Activated CD8-positive, alpha-beta T cell treated with anti-CD3 and anti-CD28 coated beads, Interleukin-2, amount 10 ng/mL, durations not matched to agents 7 days and 5 days (primary cell): ENCODE measurements at regions of chr2 and their contacts with region 1.

Region 1: GRCh38 chr2:113157118-113157896 is 16.5 kb upstream of the PSD4 start:
- DNase-seq: peak; percentile 61
- ATAC-seq: peak; percentile 90
- H3K4me3 Mint-ChIP-seq: peak overlapping the region; percentile 86
- H3K27ac Mint-ChIP-seq: peak overlapping the region; percentile 82
- H3K4me1 Mint-ChIP-seq: peaks cover 33% of the 10 kb centered on the region
- H3K27me3 Mint-ChIP-seq: peaks cover 7% of the 10 kb centered on the region

Region 2: DNA sequence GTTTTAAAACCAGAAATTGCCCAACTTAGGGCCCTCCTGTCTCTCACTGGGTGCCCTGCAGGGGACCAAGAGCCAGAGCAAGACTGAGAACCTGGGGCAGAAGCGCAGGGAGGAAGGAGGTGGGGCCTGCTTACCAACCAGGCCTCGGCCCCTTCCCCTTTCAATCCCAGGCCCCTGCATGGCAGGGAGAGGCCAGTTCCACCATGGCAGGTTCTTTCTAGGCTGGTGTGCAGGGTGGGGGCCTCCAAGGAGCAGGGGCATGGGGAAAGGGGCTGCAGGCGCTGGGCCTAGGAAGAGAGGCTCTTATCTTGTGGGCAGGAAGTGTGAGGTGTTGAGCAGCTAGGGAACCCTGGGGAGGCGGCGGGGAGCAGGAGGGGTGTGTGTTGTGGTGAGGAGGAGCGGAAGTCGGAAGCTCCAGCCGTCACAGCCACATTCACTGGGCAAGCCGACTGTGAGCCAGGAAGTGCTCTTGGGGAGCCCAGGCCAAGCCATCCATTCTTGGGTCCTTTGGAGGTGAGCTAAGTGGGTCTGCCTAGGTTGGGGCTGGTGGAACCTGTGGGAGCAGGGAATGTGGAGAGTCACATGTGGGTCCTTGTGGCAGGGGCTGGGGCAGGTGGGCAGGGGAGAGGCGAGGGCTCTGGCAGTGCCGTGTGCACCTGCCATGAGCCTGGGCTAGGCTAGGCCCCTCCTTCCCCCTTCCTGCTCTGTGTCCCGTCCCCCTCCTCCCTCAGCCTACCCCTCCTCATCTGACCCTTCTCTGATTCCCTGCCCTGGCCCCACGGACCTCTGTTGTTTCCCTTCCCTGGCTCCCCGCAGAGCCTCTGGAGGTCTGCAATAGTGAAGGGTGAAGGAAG is 16.5 kb after region 1 on chr2 and contains the start of gene PSD4:
- CTCF ChIA-PET with region 1: interaction called, 63 read pairs
- POLR2A ChIA-PET with region 1: interaction called, 81 read pairs
- DNase-seq: peak; percentile 96
- ATAC-seq: peak; percentile 75
- H3K4me3 Mint-ChIP-seq: peak within 1 kb of the TSS; percentile 83
- H3K27ac Mint-ChIP-seq: peak within 1 kb of the TSS; percentile 91
- H3K4me1 Mint-ChIP-seq: peaks cover 70% of the 10 kb centered on the region
- H3K27me3 Mint-ChIP-seq: peaks cover 2% of the 10 kb centered on the region
- total RNA-seq, gene PSD4: 394 to 404 TPM

Region 3: GRCh38 chr2:113181258-113182051 is 24.1 kb after region 1 on chr2:
- CTCF ChIA-PET with region 1: interaction called, 63 read pairs
- POLR2A ChIA-PET with region 1: interaction called, 81 read pairs
- DNase-seq: peak; percentile 56
- ATAC-seq: peak; percentile 43
- H3K4me3 Mint-ChIP-seq: peak overlapping the region; percentile 83
- H3K27ac Mint-ChIP-seq: peak overlapping the region; percentile 83
- H3K4me1 Mint-ChIP-seq: peaks cover 93% of the 10 kb centered on the region
- H3K27me3 Mint-ChIP-seq: no peaks in the 10 kb centered on the region